Natural killer cell (primary cell): ENCODE measurements at regions of chr7 and their contacts with region 1.

Region 1: GRCh38 chr7:38283809-38284208 is 10.4 kb upstream of the TARP start:
- DNase-seq: no peak
- ATAC-seq: no peak
- H3K4me3 ChIP-seq: no peak overlapping the region
- H3K4me3 Mint-ChIP-seq: peak overlapping the region; percentile 77
- H3K27ac ChIP-seq: peak overlapping the region; percentile 55
- H3K27ac Mint-ChIP-seq: peak overlapping the region; percentile 96 to 100
- H3K4me1 ChIP-seq: peaks cover 46% of the 10 kb centered on the region
- H3K4me1 Mint-ChIP-seq: peaks cover 64% of the 10 kb centered on the region in 2 donors
- H3K27me3 ChIP-seq: no peaks in the 10 kb centered on the region
- H3K27me3 Mint-ChIP-seq: no peaks in the 10 kb centered on the region
- CTCF ChIP-seq: no peak

Region 2: DNA sequence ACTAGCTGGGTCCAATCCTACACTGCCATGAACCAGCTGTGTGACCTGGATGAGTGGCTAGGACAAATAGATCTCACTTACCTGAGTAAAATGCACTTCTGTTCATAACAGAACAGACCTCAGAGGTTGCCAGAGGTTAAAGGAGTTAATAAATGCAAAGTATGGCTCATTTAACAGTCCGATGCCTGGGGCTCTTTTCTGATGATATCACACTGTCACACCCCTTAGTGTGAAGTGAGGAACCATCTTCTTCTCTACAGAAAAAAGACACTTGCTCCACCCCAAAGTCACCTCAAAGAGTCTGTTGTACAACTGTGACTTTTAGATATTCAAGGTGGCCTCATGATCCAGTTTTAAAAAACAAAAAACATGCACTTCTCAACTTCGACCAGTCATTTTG is 11.1 kb after region 1 on chr7:
- intact Hi-C with region 1: loop called (anchors 1 kb)
- DNase-seq: no peak
- ATAC-seq: peak; percentile 72 to 86 (median 75)
- H3K4me3 ChIP-seq: no peak overlapping the region
- H3K4me3 Mint-ChIP-seq: peak overlapping the region; percentile 82
- H3K27ac ChIP-seq: peak overlapping the region; percentile 97
- H3K27ac Mint-ChIP-seq: peak overlapping the region; percentile 95 to 99
- H3K4me1 ChIP-seq: peaks cover 47% of the 10 kb centered on the region
- H3K4me1 Mint-ChIP-seq: peaks cover 69 to 73% of the 10 kb centered on the region in 2 donors
- H3K27me3 ChIP-seq: no peaks in the 10 kb centered on the region
- H3K27me3 Mint-ChIP-seq: no peaks in the 10 kb centered on the region
- CTCF ChIP-seq: no peak

Region 3: DNA sequence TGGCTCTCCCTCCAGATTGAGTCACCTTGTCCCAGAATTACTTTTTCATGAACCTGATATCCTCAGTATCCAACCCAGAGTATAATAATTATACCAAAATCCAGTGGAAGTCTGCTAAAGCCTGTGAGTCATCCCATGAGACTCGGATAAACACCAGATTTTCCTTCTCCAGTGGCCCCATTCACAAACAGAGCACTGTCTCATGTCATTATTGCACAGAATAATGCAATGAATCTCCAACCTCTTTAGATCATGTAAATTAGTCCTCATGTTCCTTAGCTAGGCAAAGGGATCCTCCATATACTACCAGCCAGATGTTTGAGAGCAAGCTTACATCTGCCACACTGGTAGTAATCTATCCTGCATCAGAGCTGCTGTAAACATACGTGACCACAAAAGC is 258.3 kb after region 1 on chr7:
- intact Hi-C with region 1: no loop called
- DNase-seq: no peak
- ATAC-seq: no peak
- H3K4me3 ChIP-seq: no peak overlapping the region
- H3K4me3 Mint-ChIP-seq: no peak overlapping the region
- H3K27ac ChIP-seq: no peak overlapping the region
- H3K27ac Mint-ChIP-seq: no peak overlapping the region
- H3K4me1 ChIP-seq: peaks cover 13% of the 10 kb centered on the region
- H3K4me1 Mint-ChIP-seq: peaks cover 42 to 47% of the 10 kb centered on the region in 2 donors
- H3K27me3 ChIP-seq: no peaks in the 10 kb centered on the region
- H3K27me3 Mint-ChIP-seq: peaks cover 0 to 2% of the 10 kb centered on the region in 2 donors
- CTCF ChIP-seq: no peak

Region 4: DNA sequence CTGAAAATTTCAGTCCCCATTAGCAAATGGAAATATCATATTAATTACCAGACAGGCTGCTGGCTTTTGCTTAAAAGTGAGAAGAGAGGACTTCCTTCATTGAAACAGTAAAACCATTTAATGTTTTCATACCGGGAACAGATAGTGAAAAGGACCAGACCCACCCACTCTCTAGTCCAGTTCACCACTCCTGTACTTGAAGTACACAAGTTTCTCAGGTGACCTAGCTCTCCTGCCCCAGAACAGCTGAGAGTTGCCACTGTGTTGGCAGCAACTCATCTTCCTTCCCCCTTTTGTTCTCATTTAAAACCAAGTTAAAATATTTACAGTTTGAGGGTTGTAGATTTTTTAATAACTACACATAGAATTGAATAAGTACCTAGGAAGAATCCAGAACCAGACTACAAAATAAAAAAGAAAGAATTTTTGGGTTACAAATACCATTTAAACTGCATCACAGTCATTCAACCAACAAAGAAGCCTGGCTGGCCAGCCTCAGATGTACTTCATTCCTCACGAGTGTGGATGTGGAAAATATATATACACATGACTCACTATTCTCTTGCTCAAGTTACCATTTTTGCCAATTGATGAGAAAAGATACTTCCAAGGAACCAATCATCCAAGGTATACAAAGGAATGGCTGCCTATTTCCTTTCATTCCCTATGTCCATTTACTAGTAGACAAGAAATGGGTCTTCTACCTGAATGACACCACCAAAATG is 557.1 kb after region 1 on chr7:
- intact Hi-C with region 1: no loop called
- DNase-seq: no peak
- ATAC-seq: no peak
- H3K4me3 ChIP-seq: no peak overlapping the region
- H3K4me3 Mint-ChIP-seq: no peak overlapping the region
- H3K27ac ChIP-seq: no peak overlapping the region
- H3K27ac Mint-ChIP-seq: no peak overlapping the region
- H3K4me1 ChIP-seq: no peaks in the 10 kb centered on the region
- H3K4me1 Mint-ChIP-seq: peaks cover 29 to 34% of the 10 kb centered on the region in 2 donors
- H3K27me3 ChIP-seq: no peaks in the 10 kb centered on the region
- H3K27me3 Mint-ChIP-seq: no peaks in the 10 kb centered on the region
- CTCF ChIP-seq: no peak